ENCODE measurements at regions of chr16 and their contacts with region 1.

Region 1: DNA sequence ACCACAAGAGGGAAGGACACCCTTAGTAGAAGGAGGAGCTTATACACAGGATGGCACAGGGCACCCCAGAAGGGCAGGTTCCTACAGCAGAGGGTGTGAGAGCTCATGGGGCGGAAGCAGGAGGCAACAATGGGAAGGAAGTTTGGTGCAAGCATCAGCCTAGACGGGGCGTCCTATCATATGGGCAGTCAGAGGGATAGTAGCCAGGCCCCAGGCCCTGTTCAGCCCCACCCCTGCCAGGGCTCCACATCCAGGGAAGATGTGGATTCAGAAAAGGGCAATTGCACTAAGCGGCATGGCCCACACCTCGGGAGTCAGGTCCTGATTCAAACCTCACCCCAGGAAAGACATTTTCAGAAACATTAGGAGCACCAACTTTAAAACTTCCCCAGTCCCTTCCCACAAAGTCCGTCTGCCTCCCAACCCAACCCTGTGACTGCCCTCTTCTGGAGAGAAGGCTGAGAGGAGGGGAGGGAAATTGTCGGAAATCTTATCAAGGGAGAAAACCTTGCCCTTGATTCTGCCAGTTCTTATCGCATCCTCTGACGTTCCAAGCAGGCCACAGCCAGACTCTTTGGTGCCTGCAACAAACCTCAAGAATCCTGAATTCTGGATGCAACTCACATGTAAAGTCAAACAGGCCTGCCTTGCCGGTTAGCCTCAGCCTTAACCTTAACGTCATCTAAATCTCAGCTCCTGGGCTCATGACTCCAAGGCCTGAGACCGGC is 198.8 kb upstream of the CDH5 start:
- DNase-seq: no peak
- ATAC-seq: no peak

Region 2: DNA sequence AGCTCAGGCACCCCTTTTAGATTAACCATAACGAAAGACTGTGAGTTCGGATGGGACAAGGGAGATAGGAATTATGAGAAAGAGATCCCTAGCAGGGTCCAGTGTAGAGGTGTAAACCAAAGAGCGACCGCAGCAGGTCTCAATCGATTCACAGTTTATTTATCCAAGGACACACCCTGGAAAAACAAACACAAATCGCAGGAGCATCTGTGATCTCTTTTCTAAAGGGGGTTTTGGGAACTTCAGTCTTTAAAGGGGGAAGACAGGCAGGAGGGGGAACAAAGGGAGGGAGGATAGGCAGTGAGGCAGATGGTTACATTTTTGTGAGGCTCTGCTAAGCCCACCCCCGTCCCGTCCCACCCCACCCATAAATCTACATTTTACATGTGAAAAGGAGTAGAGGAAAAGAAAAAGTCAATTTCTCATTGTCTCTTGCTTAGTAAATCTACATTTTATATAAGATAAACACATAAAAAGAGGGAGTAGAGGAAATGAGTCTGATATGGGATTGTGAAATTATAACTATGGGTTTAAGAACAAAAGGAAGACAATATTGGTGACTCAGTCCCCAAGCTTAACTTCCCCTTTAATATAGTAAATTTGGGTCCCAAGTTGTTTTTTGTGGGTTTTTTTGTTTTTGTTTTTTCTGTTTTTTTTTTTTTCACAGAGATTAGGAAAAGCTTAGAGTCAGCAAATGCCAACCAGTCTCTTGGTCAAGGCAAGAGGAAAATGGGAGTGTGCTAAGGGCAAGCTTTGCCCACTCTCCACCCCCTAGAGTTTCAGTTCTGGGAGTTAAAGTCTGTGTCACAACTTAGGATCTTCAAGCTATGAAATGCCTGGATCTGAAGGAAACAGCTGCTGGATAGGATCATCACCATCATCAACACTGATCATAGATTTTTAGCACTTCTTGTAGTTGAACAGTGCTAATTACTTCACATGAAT is 37.8 kb after region 1 on chr16:
- intact Hi-C with region 1: loop called (anchors 2 kb)
- DNase-seq: no peak
- ATAC-seq: peak; percentile 55

Measured in sciatic nerve (tissue), 2 donors.